ENCODE measurements at regions of chr3 and their contacts with region 1.

Region 1: GRCh38 chr3:173354124-173354523 is 43.4 kb upstream of the NLGN1 start:
- DNase-seq: no peak
- H3K4me3 Mint-ChIP-seq: no peak overlapping the region
- H3K27ac Mint-ChIP-seq: no peak overlapping the region
- H3K4me1 Mint-ChIP-seq: no peaks in the 10 kb centered on the region
- H3K27me3 Mint-ChIP-seq: peaks cover 45% of the 10 kb centered on the region
- CTCF ChIP-seq: no peak

Region 2: DNA sequence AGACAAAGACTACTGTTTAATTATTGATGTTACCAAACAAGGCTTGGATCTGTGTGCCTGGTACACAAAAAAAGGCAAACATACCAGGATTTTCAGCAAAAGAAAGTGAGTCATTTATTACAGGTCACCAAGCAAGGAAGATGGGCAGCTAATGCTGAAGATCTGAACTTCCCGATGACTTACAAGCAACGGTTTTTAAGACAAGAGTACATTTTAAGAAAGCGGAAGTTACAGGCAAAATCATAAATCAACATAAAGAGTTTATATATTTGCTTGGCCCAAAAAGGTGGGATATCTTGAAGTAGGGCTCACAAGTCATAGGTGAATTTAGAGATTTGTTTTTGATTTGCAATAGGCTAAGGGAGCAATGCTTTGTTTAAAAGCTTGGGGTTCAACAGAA is 87.7 kb before region 1 on chr3:
- CTCF ChIA-PET with region 1: no interaction called
- POLR2A ChIA-PET with region 1: no interaction called
- intact Hi-C with region 1: no loop called
- DNase-seq: no peak
- H3K4me3 Mint-ChIP-seq: no peak overlapping the region
- H3K27ac Mint-ChIP-seq: no peak overlapping the region
- H3K4me1 Mint-ChIP-seq: no peaks in the 10 kb centered on the region
- H3K27me3 Mint-ChIP-seq: peaks cover 33% of the 10 kb centered on the region
- CTCF ChIP-seq: no peak

Region 3: DNA sequence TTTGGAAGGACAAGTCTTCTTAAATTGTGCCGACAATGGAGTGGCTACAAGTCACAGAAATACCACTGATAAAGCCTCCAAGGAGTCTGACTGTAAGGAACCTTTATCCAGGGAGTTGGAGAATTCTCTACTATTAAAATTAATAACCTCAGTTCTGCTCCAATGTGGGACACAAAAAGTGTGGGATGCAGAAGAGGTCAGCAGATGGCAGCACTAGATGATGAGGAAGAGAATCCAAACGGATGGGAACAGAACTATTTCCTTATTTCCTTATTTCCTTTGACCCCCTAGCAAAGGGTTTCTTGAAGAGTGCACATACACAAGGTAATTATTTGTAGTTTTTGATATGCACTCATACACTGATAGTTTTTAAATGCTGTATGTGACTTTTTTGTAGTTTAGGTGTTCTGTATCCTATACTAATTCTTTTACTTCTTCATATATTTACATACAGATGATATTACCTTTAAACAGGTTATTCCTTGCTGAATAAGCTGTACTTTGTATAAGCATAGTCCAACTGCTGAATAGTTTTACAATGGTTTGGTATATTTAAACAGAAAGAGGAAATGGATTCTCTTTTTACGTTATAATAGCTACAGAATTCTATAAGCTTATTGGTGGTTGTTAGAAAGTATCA is 17.8 kb after region 1 on chr3:
- CTCF ChIA-PET with region 1: interaction called, 41 read pairs
- POLR2A ChIA-PET with region 1: no interaction called
- intact Hi-C with region 1: no loop called
- DNase-seq: peak; percentile 58
- H3K4me3 Mint-ChIP-seq: no peak overlapping the region
- H3K27ac Mint-ChIP-seq: no peak overlapping the region
- H3K4me1 Mint-ChIP-seq: no peaks in the 10 kb centered on the region
- H3K27me3 Mint-ChIP-seq: peaks cover 70% of the 10 kb centered on the region
- CTCF ChIP-seq: peak; percentile 35